ENCODE measurements at regions of chr13 and their contacts with region 1.

Region 1: GRCh38 chr13:38763439-38764381 is 76.8 kb downstream of the FREM2 start:
- DNase-seq: peak in 1 of 3 donors; percentile 12
- ATAC-seq: no peak
- H3K4me3 ChIP-seq: no peak overlapping the region
- H3K4me1 ChIP-seq: no peaks in the 10 kb centered on the region
- CTCF ChIP-seq: no peak

Region 2: DNA sequence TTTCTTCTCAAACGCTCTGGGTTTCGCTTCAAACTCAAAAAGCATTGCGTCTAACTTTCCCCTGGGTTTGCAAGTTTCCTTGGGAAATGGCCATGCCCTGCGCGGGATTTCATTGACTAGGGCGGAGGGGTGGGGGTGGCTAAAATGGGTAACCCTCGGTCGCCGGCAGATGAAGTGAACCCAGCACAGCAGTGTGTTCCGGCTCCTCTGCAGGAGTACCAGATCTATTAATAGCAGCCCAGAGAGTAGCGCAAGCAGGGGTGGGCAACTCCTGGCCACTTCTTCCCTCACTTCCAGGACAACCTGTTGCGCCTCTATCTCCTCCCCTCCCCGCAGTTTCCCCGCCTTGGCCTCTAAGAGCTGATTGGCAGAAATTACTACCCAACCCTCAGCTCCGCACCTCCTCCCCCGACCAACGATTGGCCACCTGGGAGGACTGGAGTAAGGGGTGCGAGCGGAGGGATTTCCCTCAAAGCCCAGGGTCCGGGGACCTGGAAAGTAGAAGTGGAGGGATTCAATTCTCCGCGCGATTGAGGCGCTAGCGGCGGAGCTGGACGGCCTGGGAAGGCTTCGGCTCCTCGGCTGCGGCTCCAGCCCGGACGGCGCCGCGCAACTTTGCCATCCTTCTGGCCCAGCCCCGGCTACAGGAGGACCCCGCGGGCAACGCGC is 77.0 kb before region 1 on chr13 and contains the start of gene FREM2:
- intact Hi-C with region 1: loop called in 1 of 2 experiments (anchors 2 kb)
- DNase-seq: peak in 2 of 3 donors; percentile 55 to 64
- ATAC-seq: peak; percentile 83
- H3K4me3 ChIP-seq: no peak within 1 kb of the TSS
- H3K4me1 ChIP-seq: peaks cover 7% of the 10 kb centered on the region
- CTCF ChIP-seq: no peak
- total RNA-seq, gene FREM2: 0.82 to 3.3 (median 1.3) TPM